GM12878 (cell line): ENCODE measurements at regions of chr1 and their contacts with region 1.

Region 1: GRCh38 chr1:231616667-231617066 is 9.9 kb upstream of the DISC1 start:
- DNase-seq: no peak
- ATAC-seq: no peak
- H3K4me3 ChIP-seq: no peak overlapping the region
- H3K27ac ChIP-seq: no peak overlapping the region
- H3K4me1 ChIP-seq: peaks cover 29% of the 10 kb centered on the region
- H3K27me3 ChIP-seq: 0 out of 4 replicates have a peak, but pooled peaks cover 0 to 2% of the 10 kb centered on the region in 2 experiments
- CTCF ChIP-seq: no peak
- EP300 ChIP-seq: no peak
- POLR2A ChIP-seq: no peak
- RAD21 ChIP-seq: no peak

Region 2: DNA sequence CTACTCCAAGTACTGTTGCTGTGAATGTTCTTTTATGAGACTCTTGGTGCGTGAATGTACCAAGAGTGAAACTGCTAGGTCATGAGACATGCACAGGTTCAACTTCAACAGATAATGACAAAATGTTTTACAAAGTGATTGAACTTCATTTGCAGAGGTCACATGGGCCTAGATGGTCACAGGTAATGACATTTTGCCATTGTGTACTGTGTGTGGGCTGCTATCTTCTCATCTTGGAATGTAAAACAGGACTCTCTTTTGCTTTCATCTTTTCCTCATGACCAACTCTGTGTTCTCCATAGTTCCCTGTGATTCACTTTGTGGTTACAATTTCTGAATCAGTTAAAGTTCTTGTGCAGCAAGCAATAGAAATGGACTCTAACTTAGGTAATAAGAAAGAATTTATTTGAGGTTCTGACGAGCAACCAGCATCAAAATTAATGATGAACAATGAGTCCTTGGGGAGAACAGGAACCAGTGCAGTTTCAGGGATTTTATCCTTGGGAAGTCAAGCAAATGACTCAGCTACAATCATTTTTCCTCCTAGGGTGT is 104.4 kb before region 1 on chr1:
- CTCF ChIA-PET with region 1: no interaction called
- POLR2A ChIA-PET with region 1: no interaction called
- RAD21 ChIA-PET with region 1: no interaction called
- SMC1A ChIA-PET with region 1: no interaction called
- in situ Hi-C with region 1: no loop called
- intact Hi-C with region 1: no loop called
- DNase-seq: peak; percentile 20
- ATAC-seq: peak; percentile 69
- H3K4me3 ChIP-seq: no peak overlapping the region
- H3K27ac ChIP-seq: no peak overlapping the region
- H3K4me1 ChIP-seq: peaks cover 7% of the 10 kb centered on the region
- H3K27me3 ChIP-seq: no peaks in the 10 kb centered on the region
- CTCF ChIP-seq: no peak
- EP300 ChIP-seq: no peak; a peak in 1 of 4 replicates
- POLR2A ChIP-seq: no peak
- RAD21 ChIP-seq: no peak

Region 3: DNA sequence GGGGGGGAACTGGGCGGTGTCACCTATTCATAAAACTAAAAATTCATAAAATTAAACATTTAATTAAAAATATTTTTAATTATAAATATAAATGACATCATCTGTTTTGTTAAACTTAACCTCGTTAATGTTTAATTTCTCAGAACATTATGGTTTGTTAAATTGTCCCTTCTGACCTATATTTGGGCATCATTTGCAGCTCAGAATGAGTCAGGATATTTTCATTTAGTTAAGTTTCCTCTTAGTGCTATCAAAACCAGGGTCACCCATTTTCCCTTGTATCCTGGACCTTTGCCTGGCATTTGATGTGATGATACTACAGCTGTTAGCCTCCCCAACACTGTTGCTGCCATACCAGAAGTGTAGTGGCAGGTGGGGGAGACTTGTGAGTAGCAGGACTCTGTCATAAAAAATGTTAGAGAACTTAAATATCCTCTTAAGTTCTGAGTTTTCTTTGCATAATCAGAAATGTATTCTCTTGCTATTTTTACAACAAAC is 57.9 kb before region 1 on chr1:
- CTCF ChIA-PET with region 1: no interaction called
- POLR2A ChIA-PET with region 1: no interaction called
- RAD21 ChIA-PET with region 1: no interaction called
- SMC1A ChIA-PET with region 1: no interaction called
- in situ Hi-C with region 1: no loop called
- intact Hi-C with region 1: no loop called
- DNase-seq: no peak
- ATAC-seq: peak; percentile 28; the same call in 1 of the 3 replicates
- H3K4me3 ChIP-seq: no peak overlapping the region
- H3K27ac ChIP-seq: no peak overlapping the region
- H3K4me1 ChIP-seq: no peaks in the 10 kb centered on the region
- H3K27me3 ChIP-seq: no peaks in the 10 kb centered on the region
- CTCF ChIP-seq: no peak
- EP300 ChIP-seq: no peak
- POLR2A ChIP-seq: no peak
- RAD21 ChIP-seq: no peak

Region 4: GRCh38 chr1:231603598-231604275 is 12.9 kb before region 1 on chr1:
- CTCF ChIA-PET with region 1: interaction called, 3 read pairs
- POLR2A ChIA-PET with region 1: no interaction called
- RAD21 ChIA-PET with region 1: no interaction called
- SMC1A ChIA-PET with region 1: interaction called, 12 read pairs
- in situ Hi-C with region 1: no loop called
- intact Hi-C with region 1: no loop called
- DNase-seq: no peak
- ATAC-seq: peak; percentile 82
- H3K4me3 ChIP-seq: peak overlapping the region; percentile 58
- H3K27ac ChIP-seq: no peak overlapping the region
- H3K4me1 ChIP-seq: no peaks in the 10 kb centered on the region
- H3K27me3 ChIP-seq: peaks cover 3% of the 10 kb centered on the region in 2 experiments; a peak in 2 of 4 replicates
- CTCF ChIP-seq: peak; percentile 52 to 75 (median 71)
- EP300 ChIP-seq: no peak
- POLR2A ChIP-seq: no peak
- RAD21 ChIP-seq: peak; percentile 83

Region 5: GRCh38 chr1:231724876-231725724 is 108.4 kb after region 1 on chr1:
- CTCF ChIA-PET with region 1: no interaction called
- POLR2A ChIA-PET with region 1: no interaction called
- RAD21 ChIA-PET with region 1: no interaction called
- SMC1A ChIA-PET with region 1: no interaction called
- in situ Hi-C with region 1: no loop called
- intact Hi-C with region 1: no loop called
- DNase-seq: no peak
- ATAC-seq: peak; percentile 89
- H3K4me3 ChIP-seq: no peak overlapping the region
- H3K27ac ChIP-seq: no peak overlapping the region
- H3K4me1 ChIP-seq: no peaks in the 10 kb centered on the region
- H3K27me3 ChIP-seq: no peaks in the 10 kb centered on the region
- CTCF ChIP-seq: peak; percentile 34 to 53 (median 37); a peak in 5 of 6 replicates
- EP300 ChIP-seq: no peak
- POLR2A ChIP-seq: no peak
- RAD21 ChIP-seq: peak; percentile 25; the same call in 1 of the 2 replicates

Region 6: GRCh38 chr1:231919886-231920285 is 303.2 kb after region 1 on chr1:
- CTCF ChIA-PET with region 1: no interaction called
- POLR2A ChIA-PET with region 1: no interaction called
- RAD21 ChIA-PET with region 1: no interaction called
- SMC1A ChIA-PET with region 1: no interaction called
- in situ Hi-C with region 1: no loop called
- intact Hi-C with region 1: no loop called
- DNase-seq: no peak
- ATAC-seq: no peak
- H3K4me3 ChIP-seq: no peak overlapping the region
- H3K27ac ChIP-seq: no peak overlapping the region
- H3K4me1 ChIP-seq: peaks cover 3% of the 10 kb centered on the region; the same call in 1 of the 2 replicates
- H3K27me3 ChIP-seq: no peaks in the 10 kb centered on the region
- CTCF ChIP-seq: no peak
- EP300 ChIP-seq: no peak
- POLR2A ChIP-seq: no peak
- RAD21 ChIP-seq: no peak